Endothelial cell of umbilical vein (primary cell): ENCODE measurements at regions of chr2 and their contacts with region 1.

Region 1: DNA sequence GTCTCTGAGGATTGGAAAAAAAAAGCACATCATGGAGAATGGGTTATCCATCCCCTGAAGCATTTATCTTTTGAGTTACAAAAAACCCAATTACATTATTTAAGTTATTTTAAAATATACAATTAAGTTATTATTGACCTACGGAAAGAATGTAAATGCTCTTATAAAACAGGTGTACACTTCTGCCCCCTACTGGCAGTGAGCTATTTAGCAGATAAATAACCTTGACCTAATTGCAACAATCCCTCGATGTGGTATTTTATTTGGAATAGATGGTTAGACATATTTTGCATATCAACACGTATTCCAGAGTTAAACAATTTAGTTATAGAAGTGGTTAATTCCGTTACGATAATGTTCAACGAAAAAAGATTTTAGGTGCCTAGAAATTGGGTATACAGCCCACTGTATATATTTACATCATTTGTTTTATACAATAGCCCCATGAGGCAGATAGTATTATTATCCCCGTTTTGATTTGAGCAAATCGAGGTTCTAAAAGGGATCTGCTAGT is 9.1 kb upstream of the DAW1 start:
- DNase-seq: peak; percentile 70
- H3K4me3 ChIP-seq: no peak overlapping the region
- H3K27ac ChIP-seq: peak overlapping the region; percentile 75
- H3K4me1 ChIP-seq: peaks cover 23% of the 10 kb centered on the region
- H3K27me3 ChIP-seq: no peaks in the 10 kb centered on the region
- CTCF ChIP-seq: peak; percentile 46 to 54
- POLR2A ChIP-seq: no peak

Region 2: GRCh38 chr2:227406177-227407031 is 455.9 kb before region 1 on chr2:
- CTCF ChIA-PET with region 1: interaction called, 13 read pairs
- POLR2A ChIA-PET with region 1: no interaction called
- dilution Hi-C with region 1: no loop called
- intact Hi-C with region 1: loop called (anchors 1 kb)
- DNase-seq: peak; percentile 96
- H3K4me3 ChIP-seq: no peak overlapping the region
- H3K27ac ChIP-seq: peak overlapping the region; percentile 85
- H3K4me1 ChIP-seq: peaks cover 8% of the 10 kb centered on the region
- H3K27me3 ChIP-seq: no peaks in the 10 kb centered on the region
- CTCF ChIP-seq: peak; percentile 57 to 81
- POLR2A ChIP-seq: peak; percentile 50

Region 3: DNA sequence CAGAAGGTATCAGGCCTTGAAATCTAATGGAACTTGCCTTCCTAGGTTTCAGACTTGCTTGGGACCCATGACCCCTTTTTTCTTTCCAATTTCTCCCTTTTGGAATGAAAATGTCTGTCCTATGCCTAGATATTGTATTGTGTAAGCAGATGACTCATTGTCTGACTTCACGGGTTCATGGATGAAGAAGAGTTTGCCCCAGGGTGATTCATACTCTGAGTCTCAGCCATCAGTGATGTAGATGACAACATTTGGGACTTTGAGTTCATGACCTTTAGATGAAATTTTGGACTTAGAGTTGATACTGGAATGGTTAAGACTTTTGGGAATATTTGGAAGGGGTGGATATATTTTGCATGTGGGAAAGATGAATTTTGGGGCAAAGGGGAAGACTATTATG is 206.8 kb before region 1 on chr2:
- CTCF ChIA-PET with region 1: interaction called, 37 read pairs
- POLR2A ChIA-PET with region 1: no interaction called
- dilution Hi-C with region 1: no loop called
- intact Hi-C with region 1: loop called (anchors 1 kb)
- DNase-seq: peak; percentile 44
- H3K4me3 ChIP-seq: no peak overlapping the region
- H3K27ac ChIP-seq: no peak overlapping the region
- H3K4me1 ChIP-seq: no peaks in the 10 kb centered on the region
- H3K27me3 ChIP-seq: peaks cover 0 to 4% of the 10 kb centered on the region in 2 experiments
- CTCF ChIP-seq: no peak
- POLR2A ChIP-seq: no peak

Region 4: GRCh38 chr2:227817850-227818674 is 44.2 kb before region 1 on chr2:
- CTCF ChIA-PET with region 1: interaction called, 27 read pairs
- POLR2A ChIA-PET with region 1: interaction called, 7 read pairs
- dilution Hi-C with region 1: no loop called
- intact Hi-C with region 1: loop called (anchors 1 kb)
- DNase-seq: peak; percentile 98
- H3K4me3 ChIP-seq: peak overlapping the region in 1 of 3 experiments; percentile 68
- H3K27ac ChIP-seq: peak overlapping the region; percentile 98
- H3K4me1 ChIP-seq: peaks cover 36% of the 10 kb centered on the region
- H3K27me3 ChIP-seq: no peaks in the 10 kb centered on the region
- CTCF ChIP-seq: no peak
- POLR2A ChIP-seq: no peak

Region 5: DNA sequence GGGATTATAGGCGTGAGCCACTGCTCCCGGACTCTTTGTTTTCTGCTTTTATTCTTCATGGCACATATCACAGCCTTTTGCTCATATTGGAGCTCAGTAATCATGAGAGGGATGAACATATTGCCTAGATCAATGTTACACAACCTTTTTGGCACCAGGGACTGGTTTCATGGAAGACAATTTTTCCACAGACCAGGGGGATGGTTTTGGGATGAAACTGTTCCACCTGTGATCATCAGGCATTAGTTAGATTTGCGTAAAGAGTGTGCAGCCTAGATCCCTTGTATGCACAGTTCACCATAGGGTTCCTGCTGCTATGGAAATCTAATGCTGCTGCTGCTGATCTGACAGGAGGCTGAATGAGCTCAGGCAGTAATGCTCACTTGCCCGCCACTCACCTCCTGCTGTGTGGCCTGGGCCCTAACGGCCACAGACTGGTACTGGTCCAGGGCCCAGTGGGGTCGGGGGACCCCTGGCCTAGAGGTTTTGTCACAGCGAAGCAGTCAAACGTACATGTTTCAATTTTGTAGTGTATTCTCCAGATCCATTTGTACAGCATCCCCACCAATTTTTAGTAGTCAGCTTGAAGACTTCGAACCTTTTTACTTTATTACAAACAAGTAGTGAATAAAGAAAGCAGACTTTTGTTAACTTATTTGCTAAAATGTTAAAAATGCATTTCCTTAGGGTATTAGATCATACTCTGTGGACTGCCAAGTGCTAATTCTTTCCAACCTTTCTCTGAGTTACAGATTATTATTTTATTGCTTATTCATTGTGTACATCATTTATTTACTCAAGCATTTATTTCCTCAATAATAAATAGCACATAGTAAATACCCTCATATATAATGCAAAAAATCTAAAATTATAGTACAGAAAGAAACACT is 15.4 kb after region 1 on chr2:
- CTCF ChIA-PET with region 1: interaction called, 67 read pairs
- POLR2A ChIA-PET with region 1: no interaction called
- dilution Hi-C with region 1: no loop called
- intact Hi-C with region 1: no loop called
- DNase-seq: no peak
- H3K4me3 ChIP-seq: no peak overlapping the region
- H3K27ac ChIP-seq: no peak overlapping the region
- H3K4me1 ChIP-seq: no peaks in the 10 kb centered on the region
- H3K27me3 ChIP-seq: no peaks in the 10 kb centered on the region
- CTCF ChIP-seq: no peak
- POLR2A ChIP-seq: no peak

Region 6: GRCh38 chr2:227903381-227903780 is 41.1 kb after region 1 on chr2:
- CTCF ChIA-PET with region 1: no interaction called
- POLR2A ChIA-PET with region 1: no interaction called
- dilution Hi-C with region 1: no loop called
- intact Hi-C with region 1: no loop called
- DNase-seq: no peak
- H3K4me3 ChIP-seq: no peak overlapping the region
- H3K27ac ChIP-seq: no peak overlapping the region
- H3K4me1 ChIP-seq: no peaks in the 10 kb centered on the region
- H3K27me3 ChIP-seq: no peaks in the 10 kb centered on the region
- CTCF ChIP-seq: no peak
- POLR2A ChIP-seq: no peak